ENCODE measurements at regions of chr22 and their contacts with region 1.

Region 1: GRCh38 chr22:17514084-17514483 is 49.2 kb upstream of the SLC25A18 start:
- DNase-seq: no peak
- ATAC-seq: no peak
- H3K4me3 ChIP-seq: no peak overlapping the region
- H3K27ac ChIP-seq: no peak overlapping the region
- H3K4me1 ChIP-seq: no peaks in the 10 kb centered on the region
- H3K27me3 ChIP-seq: no peaks in the 10 kb centered on the region
- CTCF ChIP-seq: no peak

Region 2: DNA sequence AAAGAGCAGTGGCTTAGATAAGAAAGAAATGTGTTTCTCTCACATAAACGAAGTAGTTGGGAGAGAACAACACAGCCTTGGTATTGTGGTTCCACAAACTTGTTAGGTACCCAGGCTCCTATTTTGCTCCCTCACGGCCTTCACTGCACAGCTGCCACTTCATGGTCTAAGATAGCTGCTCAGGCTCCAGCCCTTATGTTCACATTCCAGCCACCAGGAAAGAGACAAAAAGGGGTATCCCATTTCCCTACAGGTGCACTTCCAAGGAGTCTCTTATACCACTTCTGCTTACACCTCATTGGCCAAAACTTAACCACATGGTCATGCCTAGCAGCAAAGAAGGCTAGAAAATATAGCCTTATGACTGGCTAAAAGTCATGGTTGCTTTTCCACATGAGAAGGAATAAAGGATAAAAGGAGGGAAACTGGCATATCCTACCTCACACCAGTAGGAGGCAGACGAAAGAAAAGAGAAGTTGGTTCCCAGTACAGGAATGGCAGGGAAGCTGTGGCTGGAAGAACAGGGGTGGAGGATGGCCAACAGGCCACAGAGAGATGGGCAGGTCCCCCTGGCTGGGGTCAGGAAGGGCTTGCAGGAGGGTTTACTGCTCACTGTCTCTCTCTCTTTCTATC is 349.6 kb before region 1 on chr22:
- intact Hi-C with region 1: loop called in 1 of 3 experiments (anchors 10 kb)
- DNase-seq: no peak
- ATAC-seq: no peak
- H3K4me3 ChIP-seq: no peak overlapping the region
- H3K27ac ChIP-seq: no peak overlapping the region
- H3K4me1 ChIP-seq: peaks cover 0 to 6% (median 0%) of the 10 kb centered on the region in 3 donors
- H3K27me3 ChIP-seq: no peaks in the 10 kb centered on the region
- CTCF ChIP-seq: no peak

Region 3: GRCh38 chr22:17381237-17381914 is 132.7 kb before region 1 on chr22:
- intact Hi-C with region 1: no loop called
- DNase-seq: no peak
- ATAC-seq: no peak
- H3K4me3 ChIP-seq: no peak overlapping the region
- H3K27ac ChIP-seq: no peak overlapping the region
- H3K4me1 ChIP-seq: no peaks in the 10 kb centered on the region
- H3K27me3 ChIP-seq: no peaks in the 10 kb centered on the region
- CTCF ChIP-seq: no peak

Region 4: GRCh38 chr22:17460895-17461294 is 53.2 kb before region 1 on chr22:
- intact Hi-C with region 1: no loop called
- DNase-seq: no peak
- ATAC-seq: no peak
- H3K4me3 ChIP-seq: no peak overlapping the region
- H3K27ac ChIP-seq: no peak overlapping the region
- H3K4me1 ChIP-seq: no peaks in the 10 kb centered on the region
- H3K27me3 ChIP-seq: no peaks in the 10 kb centered on the region
- CTCF ChIP-seq: no peak

Region 5: GRCh38 chr22:17655289-17655688 is 141.2 kb after region 1 on chr22:
- intact Hi-C with region 1: no loop called
- DNase-seq: no peak
- ATAC-seq: no peak
- H3K4me3 ChIP-seq: no peak overlapping the region
- H3K27ac ChIP-seq: no peak overlapping the region
- H3K4me1 ChIP-seq: peaks cover 0 to 9% (median 6%) of the 10 kb centered on the region in 3 donors
- H3K27me3 ChIP-seq: no peaks in the 10 kb centered on the region
- CTCF ChIP-seq: no peak

Region 6: GRCh38 chr22:17672417-17672991 is 158.4 kb after region 1 on chr22:
- intact Hi-C with region 1: no loop called
- DNase-seq: no peak
- ATAC-seq: peak in 2 of 4 donors; percentile 21 to 35
- H3K4me3 ChIP-seq: no peak overlapping the region
- H3K27ac ChIP-seq: no peak overlapping the region
- H3K4me1 ChIP-seq: peaks cover 0 to 5% (median 0%) of the 10 kb centered on the region in 3 donors
- H3K27me3 ChIP-seq: no peaks in the 10 kb centered on the region
- CTCF ChIP-seq: no peak